Posterior cingulate gyrus (tissue), 11 donors: ENCODE measurements at regions of chr22 and their contacts with region 1.

Region 1: DNA sequence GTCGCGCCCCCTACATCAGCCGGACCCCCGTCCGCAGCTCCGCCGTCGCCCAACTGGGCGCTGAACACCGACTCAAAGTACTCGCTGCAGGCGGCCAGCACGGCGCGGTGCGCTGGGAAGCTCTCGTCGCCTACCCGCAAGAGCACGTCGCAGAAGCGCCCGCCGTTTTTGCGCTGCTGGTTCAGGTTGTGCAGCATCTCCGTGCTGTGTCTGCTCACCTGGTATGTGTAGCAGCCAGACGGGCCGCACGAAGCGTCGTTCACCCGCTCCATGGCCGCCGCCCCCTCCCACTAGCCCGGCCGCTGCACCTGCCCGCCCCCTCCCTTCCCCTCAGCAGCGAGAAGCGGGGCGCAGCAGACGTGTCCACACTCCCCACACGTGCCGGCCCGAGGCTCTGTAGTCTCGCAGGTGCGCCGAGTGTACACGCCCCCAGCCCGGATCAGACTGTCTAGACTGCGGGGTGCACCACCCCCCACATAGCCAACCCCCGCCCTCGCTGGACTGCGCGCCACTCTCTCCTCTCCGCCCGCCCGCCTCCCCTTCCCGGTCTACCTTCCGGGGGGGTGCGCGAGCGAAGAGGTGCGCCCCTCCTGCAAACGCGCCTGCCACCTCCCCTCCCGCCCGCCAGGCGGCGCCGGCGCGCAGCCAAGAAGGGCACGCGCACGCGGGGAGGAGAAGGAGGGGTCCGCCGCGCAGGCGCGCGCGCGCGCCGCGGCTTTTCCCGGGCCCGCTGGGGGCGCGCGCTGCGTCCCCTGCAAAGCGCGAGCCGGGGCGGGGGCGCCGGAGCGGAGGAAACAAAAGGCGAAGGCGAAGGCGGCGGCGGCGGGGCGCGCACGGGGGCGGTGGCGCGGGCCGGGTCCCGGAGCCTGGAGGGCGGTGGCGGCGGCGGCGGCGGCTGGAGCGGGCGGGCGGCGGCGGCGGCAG is 553 bp downstream of the PATZ1 start:
- DNase-seq: peak; percentile 63 to 97 (median 79)

Region 2: DNA sequence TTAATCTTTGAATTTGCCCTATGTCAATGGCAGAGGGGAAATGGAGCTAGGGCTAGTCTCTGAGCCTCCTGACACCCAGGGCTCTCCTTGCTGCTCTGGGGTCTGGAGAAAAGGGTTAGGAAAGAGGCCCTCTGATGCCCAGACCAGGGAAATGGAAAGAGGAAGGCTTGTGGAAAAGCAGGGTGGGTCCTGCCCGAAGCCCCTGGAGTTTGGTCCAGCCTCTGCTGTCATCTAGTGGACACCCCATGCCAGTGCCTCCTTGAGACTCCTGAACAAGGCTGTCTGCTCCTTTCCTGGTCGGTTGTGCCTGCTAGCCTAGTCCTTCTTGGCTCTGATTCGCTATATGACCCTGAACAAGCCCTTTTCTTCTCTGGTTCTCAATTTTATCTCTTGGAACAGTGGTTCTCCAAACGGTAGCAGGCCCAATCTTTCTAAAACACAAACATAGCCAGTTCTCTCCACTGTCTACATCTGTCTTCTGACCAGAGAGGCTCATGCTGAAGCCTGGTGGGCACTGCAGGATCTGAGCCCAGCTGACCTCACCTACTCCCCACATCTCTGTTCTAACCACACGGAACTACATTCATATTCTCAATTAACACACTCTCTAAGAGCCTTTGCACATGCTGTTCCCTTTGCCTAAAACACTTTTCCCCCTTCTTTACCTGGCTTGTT is 196.5 kb before region 1 on chr22:
- intact Hi-C with region 1: no loop called
- DNase-seq: peak in 9 of 10 donors; percentile 52 to 95 (median 72)

Region 3: GRCh38 chr22:31290494-31291471 is 54.8 kb before region 1 on chr22:
- intact Hi-C with region 1: loop called (anchors 2 kb)
- DNase-seq: peak; percentile 92 to 99 (median 96)

Region 4: GRCh38 chr22:31399211-31400028 is 53.8 kb after region 1 on chr22 and contains the start of gene DRG1:
- intact Hi-C with region 1: loop called (anchors 1 kb)
- DNase-seq: peak; percentile 97 to 100 (median 98)

Region 5: GRCh38 chr22:31496007-31496734 is 150.6 kb after region 1 on chr22 and contains the start of gene SFI1:
- intact Hi-C with region 1: loop called (anchors 10 kb)
- DNase-seq: peak; percentile 91 to 99 (median 94)

Region 6: GRCh38 chr22:31630331-31631329 is 285.0 kb after region 1 on chr22:
- intact Hi-C with region 1: loop called (anchors 10 kb)
- DNase-seq: peak; percentile 56 to 96 (median 72)